AG04449 (cell line): ENCODE measurements at regions of chr5 and their contacts with region 1.

Region 1: DNA sequence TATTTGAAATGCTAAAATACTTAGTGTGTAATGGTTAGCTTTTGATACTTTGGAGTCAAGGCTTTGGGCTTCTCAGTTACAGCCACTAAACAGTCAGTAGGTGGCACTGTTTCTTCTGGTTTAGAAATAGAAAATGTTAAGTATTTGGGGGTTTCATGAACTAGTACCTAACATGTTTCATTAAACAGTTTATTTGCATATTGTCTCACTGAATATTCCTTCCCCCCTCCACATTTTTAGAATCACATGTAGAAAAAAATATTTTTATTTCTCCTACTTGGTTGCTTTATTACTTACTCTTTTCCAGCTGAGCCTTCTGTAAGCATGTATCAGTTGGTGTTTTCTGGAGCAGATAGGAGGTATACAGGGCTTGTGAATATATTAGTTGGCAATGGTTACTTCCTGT is 48.0 kb downstream of the IPO11 start:
- DNase-seq: no peak
- H3K4me3 ChIP-seq: no peak overlapping the region
- CTCF ChIP-seq: peak; percentile 54

Region 2: GRCh38 chr5:62450259-62450658 is 10.3 kb before region 1 on chr5:
- CTCF ChIA-PET with region 1: interaction called, 69 read pairs
- POLR2A ChIA-PET with region 1: no interaction called
- DNase-seq: no peak
- H3K4me3 ChIP-seq: no peak overlapping the region
- CTCF ChIP-seq: no peak

Region 3: GRCh38 chr5:62475072-62475471 is 14.5 kb after region 1 on chr5:
- CTCF ChIA-PET with region 1: interaction called, 21 read pairs
- POLR2A ChIA-PET with region 1: no interaction called
- DNase-seq: no peak
- H3K4me3 ChIP-seq: no peak overlapping the region
- CTCF ChIP-seq: no peak

Region 4: DNA sequence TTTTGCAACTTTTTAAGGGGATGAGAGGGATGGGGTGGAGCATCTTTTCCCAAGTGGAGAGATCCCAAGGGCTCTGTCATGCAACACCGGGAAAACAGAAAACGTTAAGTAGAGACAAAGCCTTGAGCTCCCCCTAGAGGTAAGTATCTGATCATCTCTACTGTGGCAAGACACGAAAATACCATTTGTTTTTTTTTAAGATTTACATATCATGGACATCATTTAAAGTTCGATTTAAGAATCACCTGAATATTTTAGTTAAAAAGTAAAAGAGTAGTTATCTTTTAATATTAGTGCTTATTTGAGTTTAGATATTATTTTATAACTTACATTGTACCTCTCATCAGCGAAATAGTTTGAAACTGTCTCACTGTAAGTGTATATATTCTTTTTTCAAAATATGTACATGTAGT is 318.4 kb after region 1 on chr5:
- CTCF ChIA-PET with region 1: interaction called, 40 read pairs
- POLR2A ChIA-PET with region 1: no interaction called
- DNase-seq: peak; percentile 14
- H3K4me3 ChIP-seq: no peak overlapping the region
- CTCF ChIP-seq: peak; percentile 70